ENCODE measurements at regions of chr1 and their contacts with region 1.

Region 1: DNA sequence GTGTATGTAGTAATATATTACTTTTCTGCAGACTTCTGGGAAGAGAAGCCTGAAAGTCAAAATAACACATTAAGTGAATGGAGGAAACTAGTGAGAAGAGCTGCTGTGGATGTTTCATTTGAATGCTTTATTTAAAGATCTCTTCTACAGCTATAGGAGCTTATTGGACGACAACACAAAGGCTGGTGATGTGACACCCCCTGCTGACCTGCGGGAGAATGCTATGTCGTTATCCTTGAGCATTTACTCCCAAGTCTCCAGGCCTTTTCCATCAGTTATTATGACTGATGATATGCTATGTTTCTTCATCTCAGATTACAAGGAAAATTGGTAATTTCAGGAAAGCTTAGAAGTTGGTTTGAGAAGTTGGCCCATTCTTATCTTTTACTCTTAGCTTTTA is 22.3 kb upstream of the PLA2G4A start:
- DNase-seq: peak; percentile 23 to 77
- ATAC-seq: peak; percentile 81 to 91
- H3K4me3 ChIP-seq: no peak overlapping the region
- H3K27ac ChIP-seq: peak overlapping the region in 1 of 2 experiments; percentile 35; a peak in 1 of 6 replicates
- H3K4me1 ChIP-seq: peaks cover 11% of the 10 kb centered on the region
- CTCF ChIP-seq: peak; percentile 57
- EP300 ChIP-seq: no peak
- POLR2A ChIP-seq: no peak
- RAD21 ChIP-seq: peak; percentile 82 to 83

Region 2: GRCh38 chr1:186482661-186483255 is 323.7 kb before region 1 on chr1:
- CTCF ChIA-PET with region 1: interaction called, 12 read pairs
- POLR2A ChIA-PET with region 1: no interaction called
- DNase-seq: peak; percentile 41 to 77
- ATAC-seq: peak; percentile 83 to 90
- H3K4me3 ChIP-seq: no peak overlapping the region
- H3K27ac ChIP-seq: peak overlapping the region; percentile 17 to 38; a peak in 5 of 6 replicates
- H3K4me1 ChIP-seq: peaks cover 23% of the 10 kb centered on the region; the same call in 2 of the 3 replicates
- CTCF ChIP-seq: peak; percentile 98
- EP300 ChIP-seq: no peak
- POLR2A ChIP-seq: no peak
- RAD21 ChIP-seq: peak; percentile 99 to 100

Region 3: DNA sequence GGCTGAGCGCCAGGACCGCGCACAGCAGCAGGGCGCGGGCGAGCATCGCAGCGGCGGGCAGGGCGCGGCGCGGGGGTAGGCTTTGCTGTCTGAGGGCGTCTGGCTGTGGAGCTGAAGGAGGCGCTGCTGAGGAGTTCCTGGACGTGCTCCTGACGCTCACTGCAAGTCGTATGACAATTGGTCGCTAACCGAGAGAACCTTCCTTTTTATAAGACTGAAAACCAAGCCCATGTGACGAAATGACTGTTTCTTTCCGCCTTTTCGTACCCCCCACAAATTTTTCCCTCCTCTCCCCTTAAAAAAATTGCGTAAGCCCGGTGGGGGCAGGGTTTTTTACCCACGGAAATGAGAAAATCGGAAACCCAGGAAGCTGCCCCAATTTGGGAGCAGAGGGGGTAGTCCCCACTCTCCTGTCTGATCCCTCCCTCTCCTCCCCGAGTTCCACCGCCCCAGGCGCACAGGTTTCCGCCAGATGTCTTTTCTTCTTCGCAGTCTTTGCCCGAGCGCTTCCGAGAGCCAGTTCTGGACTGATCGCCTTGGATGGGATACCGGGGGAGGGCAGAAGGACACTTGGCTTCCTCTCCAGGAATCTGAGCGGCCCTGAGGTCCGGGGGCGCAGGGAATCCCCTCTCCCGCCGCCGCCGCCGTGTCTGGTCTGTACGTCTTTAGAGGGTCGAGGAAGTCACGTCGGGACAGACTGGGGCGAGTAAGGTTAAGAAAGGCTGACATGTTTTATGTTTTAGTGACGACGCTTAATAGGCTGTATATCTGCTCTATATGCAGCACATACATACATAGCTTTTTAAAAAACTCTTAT is 126.0 kb before region 1 on chr1 and contains the start of gene PTGS2:
- CTCF ChIA-PET with region 1: interaction called, 24 read pairs
- POLR2A ChIA-PET with region 1: no interaction called
- DNase-seq: peak; percentile 84 to 97
- ATAC-seq: peak; percentile 98 to 99
- H3K4me3 ChIP-seq: peak within 1 kb of the TSS; percentile 72
- H3K27ac ChIP-seq: peak within 1 kb of the TSS; percentile 93
- H3K4me1 ChIP-seq: peaks cover 35% of the 10 kb centered on the region
- CTCF ChIP-seq: peak; percentile 48
- EP300 ChIP-seq: peak; percentile 55 to 75; a peak in 3 of 5 replicates
- POLR2A ChIP-seq: peak; percentile 90
- RAD21 ChIP-seq: peak; percentile 35 to 58; a peak in 4 of 5 replicates
- polyA plus RNA-seq, gene PTGS2: 127 and 140 TPM in 2 replicates

Region 4: GRCh38 chr1:186736971-186737685 is 69.3 kb before region 1 on chr1:
- CTCF ChIA-PET with region 1: no interaction called
- POLR2A ChIA-PET with region 1: interaction called, 17 read pairs
- DNase-seq: no peak
- ATAC-seq: no peak
- H3K4me3 ChIP-seq: no peak overlapping the region
- H3K27ac ChIP-seq: no peak overlapping the region
- H3K4me1 ChIP-seq: 0 out of 3 replicates have a peak, but pooled peaks cover 4% of the 10 kb centered on the region
- CTCF ChIP-seq: no peak
- EP300 ChIP-seq: no peak
- POLR2A ChIP-seq: no peak
- RAD21 ChIP-seq: no peak